ENCODE measurements at regions of chr2 and their contacts with region 1.

Region 1: DNA sequence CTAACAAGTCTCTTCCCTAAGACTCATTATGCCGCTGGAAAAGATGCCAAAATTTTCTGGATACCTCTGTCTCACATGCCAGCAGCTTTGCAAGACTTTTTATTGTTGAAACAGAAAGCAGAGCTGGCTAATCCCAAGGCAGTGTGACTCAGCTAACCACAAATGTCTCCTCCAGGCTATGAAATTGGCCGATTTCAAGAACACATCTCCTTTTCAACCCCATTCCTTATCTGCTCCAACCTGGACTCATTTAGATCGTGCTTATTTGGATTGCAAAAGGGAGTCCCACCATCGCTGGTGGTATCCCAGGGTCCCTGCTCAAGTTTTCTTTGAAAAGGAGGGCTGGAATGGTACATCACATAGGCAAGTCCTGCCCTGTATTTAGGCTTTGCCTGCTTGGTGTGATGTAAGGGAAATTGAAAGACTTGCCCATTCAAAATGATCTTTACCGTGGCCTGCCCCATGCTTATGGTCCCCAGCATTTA is 26.3 kb downstream of the DHRS9 start:
- DNase-seq: peak; percentile 99
- ATAC-seq: peak; percentile 93
- H3K4me3 ChIP-seq: peak overlapping the region; percentile 25; the same call in 1 of the 2 replicates
- H3K27ac ChIP-seq: peak overlapping the region; percentile 60
- H3K4me1 ChIP-seq: peaks cover 42% of the 10 kb centered on the region
- H3K27me3 ChIP-seq: no peaks in the 10 kb centered on the region
- CTCF ChIP-seq: no peak

Region 2: DNA sequence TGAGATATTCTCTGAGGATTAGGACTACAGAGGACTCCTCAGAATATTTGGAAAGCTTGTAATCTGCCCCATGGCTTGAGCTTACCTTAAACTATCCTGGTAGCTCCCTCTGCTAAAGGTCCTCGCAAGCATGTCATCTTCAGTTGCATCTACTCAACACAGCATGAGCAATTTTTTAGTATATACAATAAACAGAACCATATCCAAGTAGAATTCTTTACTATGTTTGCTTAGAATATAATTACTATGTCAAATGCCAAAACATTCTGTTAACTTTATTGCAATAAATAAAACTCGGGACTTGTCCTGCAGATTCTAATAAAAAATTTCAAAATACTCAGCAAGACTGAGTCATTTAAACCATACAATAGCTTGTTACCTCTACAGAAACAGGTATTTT is 127.3 kb before region 1 on chr2:
- CTCF ChIA-PET with region 1: no interaction called
- POLR2A ChIA-PET with region 1: no interaction called
- intact Hi-C with region 1: loop called (anchors 2 kb)
- DNase-seq: peak; percentile 74
- ATAC-seq: peak; percentile 93
- H3K4me3 ChIP-seq: no peak overlapping the region
- H3K27ac ChIP-seq: peak overlapping the region; percentile 42
- H3K4me1 ChIP-seq: peaks cover 35% of the 10 kb centered on the region
- H3K27me3 ChIP-seq: no peaks in the 10 kb centered on the region
- CTCF ChIP-seq: no peak

Region 3: GRCh38 chr2:169038338-169038757 is 57.3 kb before region 1 on chr2:
- CTCF ChIA-PET with region 1: no interaction called
- POLR2A ChIA-PET with region 1: interaction called, 3 read pairs
- intact Hi-C with region 1: loop called (anchors 2 kb)
- DNase-seq: peak; percentile 90
- ATAC-seq: peak; percentile 76
- H3K4me3 ChIP-seq: no peak overlapping the region
- H3K27ac ChIP-seq: peak overlapping the region; percentile 77
- H3K4me1 ChIP-seq: peaks cover 31% of the 10 kb centered on the region
- H3K27me3 ChIP-seq: no peaks in the 10 kb centered on the region
- CTCF ChIP-seq: no peak